Motor neuron (in vitro differentiated cells): ENCODE measurements at regions of chr20 and their contacts with region 1.

Region 1: GRCh38 chr20:58209652-58210397 is 18.6 kb downstream of the ANKRD60 start:
- ATAC-seq: peak; percentile 75 to 95 (median 82)
- H3K4me3 ChIP-seq: no peak overlapping the region
- H3K27ac ChIP-seq: no peak overlapping the region
- H3K4me1 ChIP-seq: peaks cover 15 to 16% of the 10 kb centered on the region in 2 donors

Region 2: DNA sequence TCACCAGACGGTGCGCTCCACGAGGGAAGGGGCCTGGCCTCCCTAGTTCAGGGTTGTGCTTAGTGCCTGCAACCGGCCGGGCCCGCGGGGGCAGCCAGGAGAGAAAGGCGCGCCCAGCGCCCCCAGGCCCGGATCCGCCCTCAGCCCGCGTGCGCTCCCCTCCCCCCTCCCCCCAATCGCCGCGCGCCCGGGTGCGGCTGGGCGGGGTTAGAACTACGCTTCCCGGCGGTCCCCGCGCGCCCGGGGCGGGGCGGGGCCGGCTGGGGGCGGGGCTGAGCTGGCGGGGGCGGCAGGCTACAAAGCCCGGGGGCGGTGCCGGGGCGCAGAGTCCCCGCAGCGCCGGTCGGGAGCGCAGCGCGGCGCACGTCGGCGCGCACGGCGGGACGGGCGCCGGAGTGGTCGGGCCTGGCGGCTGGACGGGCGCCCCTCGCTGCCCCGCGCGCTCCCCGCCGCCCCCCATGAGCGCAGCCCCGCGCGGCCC is 818.7 kb before region 1 on chr20 and contains the start of gene RBM38:
- in situ Hi-C with region 1: loop called in 1 of 9 experiments (anchors 25 kb)
- ATAC-seq: peak; percentile 65 to 84 (median 71)
- H3K4me3 ChIP-seq: peak within 1 kb of the TSS; percentile 57 to 85 (median 75)
- H3K27ac ChIP-seq: peak within 1 kb of the TSS in 1 of 2 donors; percentile 47
- H3K4me1 ChIP-seq: peaks cover 43 to 53% of the 10 kb centered on the region in 2 donors
- total RNA-seq, gene RBM38: 1.2 to 24.3 (median 9.6) TPM

Region 3: DNA sequence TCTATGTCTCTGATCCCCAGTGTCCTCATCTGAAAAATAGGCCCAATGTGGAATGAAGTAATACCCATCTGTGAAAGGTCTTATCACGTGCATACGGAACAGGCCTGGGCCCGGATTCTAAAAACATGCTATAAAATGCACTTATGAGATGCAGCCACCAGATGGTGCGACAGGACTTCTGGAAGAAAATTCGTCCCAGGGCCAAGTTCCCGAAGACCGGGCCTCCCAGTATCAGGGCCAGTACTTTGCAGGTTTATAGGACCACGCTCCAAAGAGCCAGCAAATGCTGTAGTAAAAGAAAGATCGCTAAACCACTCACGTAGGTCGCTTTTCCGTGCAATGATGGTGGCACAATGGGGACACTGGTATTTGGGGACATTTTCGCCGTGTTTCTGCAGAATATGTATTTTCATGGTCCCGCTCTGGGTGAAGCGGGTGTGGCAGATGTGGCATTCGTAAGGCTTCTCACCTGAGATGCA is 695.5 kb before region 1 on chr20:
- in situ Hi-C with region 1: loop called in 8 of 9 experiments (anchors 10 to 25 kb)
- ATAC-seq: peak; percentile 49 to 80 (median 72)
- H3K4me3 ChIP-seq: no peak overlapping the region
- H3K27ac ChIP-seq: no peak overlapping the region
- H3K4me1 ChIP-seq: peaks cover 0 to 2% of the 10 kb centered on the region in 2 donors

Region 4: GRCh38 chr20:57596998-57597939 is 612.6 kb before region 1 on chr20:
- in situ Hi-C with region 1: loop called (anchors 5 to 25 kb)
- ATAC-seq: peak; percentile 72 to 93 (median 77)
- H3K4me3 ChIP-seq: no peak overlapping the region
- H3K27ac ChIP-seq: no peak overlapping the region
- H3K4me1 ChIP-seq: peaks cover 3 to 7% of the 10 kb centered on the region in 2 donors

Region 5: GRCh38 chr20:57622579-57623377 is 587.0 kb before region 1 on chr20:
- in situ Hi-C with region 1: loop called in 2 of 9 experiments (anchors 25 kb)
- ATAC-seq: peak; percentile 35 to 84 (median 60)
- H3K4me3 ChIP-seq: no peak overlapping the region
- H3K27ac ChIP-seq: no peak overlapping the region
- H3K4me1 ChIP-seq: peaks cover 0 to 3% of the 10 kb centered on the region in 2 donors

Region 6: GRCh38 chr20:58094160-58094559 is 115.7 kb before region 1 on chr20:
- in situ Hi-C with region 1: no loop called
- ATAC-seq: no peak
- H3K4me3 ChIP-seq: no peak overlapping the region
- H3K27ac ChIP-seq: no peak overlapping the region
- H3K4me1 ChIP-seq: no peaks in the 10 kb centered on the region

Region 7: DNA sequence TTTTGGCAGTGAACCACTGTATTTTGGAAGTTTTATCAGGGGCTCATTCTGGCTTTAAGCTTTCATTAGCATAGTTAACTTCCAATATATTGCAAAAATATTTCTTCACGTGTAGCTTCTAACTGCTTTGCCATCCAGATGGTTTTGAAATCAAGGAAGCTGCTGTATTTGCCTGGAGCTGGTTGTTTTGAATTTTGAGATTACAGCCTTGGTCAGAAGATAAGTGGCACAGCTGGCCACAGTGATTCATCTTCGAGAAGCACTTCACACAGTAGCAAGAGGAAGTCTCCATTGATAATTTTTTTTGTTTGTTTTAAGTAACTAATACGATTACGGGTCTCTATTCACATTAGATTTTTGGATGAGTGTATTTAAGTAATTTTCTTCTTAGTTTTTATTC is 301.5 kb after region 1 on chr20:
- in situ Hi-C with region 1: no loop called
- ATAC-seq: peak in 3 of 8 experiments; percentile 11 to 37 (median 19)
- H3K4me3 ChIP-seq: no peak overlapping the region
- H3K27ac ChIP-seq: no peak overlapping the region
- H3K4me1 ChIP-seq: peaks cover 7 to 10% of the 10 kb centered on the region in 2 donors